Sigmoid colon (tissue), 7 donors: ENCODE measurements at regions of chr1 and their contacts with region 1.

Region 1: GRCh38 chr1:19385869-19386591 is 73.9 kb downstream of the SLC66A1 start:
- DNase-seq: peak; percentile 86
- H3K4me3 ChIP-seq: no peak overlapping the region
- H3K27ac ChIP-seq: peak overlapping the region; percentile 62 to 98 (median 74)
- H3K4me1 ChIP-seq: peaks cover 0 to 63% (median 55%) of the 10 kb centered on the region in 4 donors
- H3K27me3 ChIP-seq: no peaks in the 10 kb centered on the region
- CTCF ChIP-seq: no peak
- EP300 ChIP-seq: no peak
- POLR2A ChIP-seq: no peak

Region 2: DNA sequence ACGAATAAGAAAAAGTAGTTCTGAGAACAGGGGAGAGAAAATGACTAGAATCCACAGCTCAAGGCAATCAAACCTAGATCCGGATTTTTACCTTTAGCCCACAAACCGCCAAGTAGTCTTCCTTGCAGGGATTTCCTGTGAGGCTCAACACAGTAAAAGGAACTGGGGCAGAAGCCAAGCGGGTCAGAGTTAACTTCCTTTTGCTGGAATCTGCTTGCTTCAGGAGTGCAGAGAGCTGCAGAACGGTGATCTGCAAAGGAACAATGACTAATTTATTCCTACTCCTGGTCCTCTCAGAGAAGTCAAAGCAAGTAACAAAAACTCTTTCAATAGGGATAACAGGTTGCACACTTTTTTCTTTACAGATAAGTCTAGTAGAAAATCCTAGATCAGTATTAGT is 229.4 kb before region 1 on chr1:
- intact Hi-C with region 1: no loop called
- DNase-seq: peak; percentile 76
- H3K4me3 ChIP-seq: no peak overlapping the region
- H3K27ac ChIP-seq: peak overlapping the region in 1 of 4 donors; percentile 46
- H3K4me1 ChIP-seq: no peaks in the 10 kb centered on the region
- H3K27me3 ChIP-seq: no peaks in the 10 kb centered on the region
- CTCF ChIP-seq: no peak
- EP300 ChIP-seq: no peak
- POLR2A ChIP-seq: no peak

Region 3: DNA sequence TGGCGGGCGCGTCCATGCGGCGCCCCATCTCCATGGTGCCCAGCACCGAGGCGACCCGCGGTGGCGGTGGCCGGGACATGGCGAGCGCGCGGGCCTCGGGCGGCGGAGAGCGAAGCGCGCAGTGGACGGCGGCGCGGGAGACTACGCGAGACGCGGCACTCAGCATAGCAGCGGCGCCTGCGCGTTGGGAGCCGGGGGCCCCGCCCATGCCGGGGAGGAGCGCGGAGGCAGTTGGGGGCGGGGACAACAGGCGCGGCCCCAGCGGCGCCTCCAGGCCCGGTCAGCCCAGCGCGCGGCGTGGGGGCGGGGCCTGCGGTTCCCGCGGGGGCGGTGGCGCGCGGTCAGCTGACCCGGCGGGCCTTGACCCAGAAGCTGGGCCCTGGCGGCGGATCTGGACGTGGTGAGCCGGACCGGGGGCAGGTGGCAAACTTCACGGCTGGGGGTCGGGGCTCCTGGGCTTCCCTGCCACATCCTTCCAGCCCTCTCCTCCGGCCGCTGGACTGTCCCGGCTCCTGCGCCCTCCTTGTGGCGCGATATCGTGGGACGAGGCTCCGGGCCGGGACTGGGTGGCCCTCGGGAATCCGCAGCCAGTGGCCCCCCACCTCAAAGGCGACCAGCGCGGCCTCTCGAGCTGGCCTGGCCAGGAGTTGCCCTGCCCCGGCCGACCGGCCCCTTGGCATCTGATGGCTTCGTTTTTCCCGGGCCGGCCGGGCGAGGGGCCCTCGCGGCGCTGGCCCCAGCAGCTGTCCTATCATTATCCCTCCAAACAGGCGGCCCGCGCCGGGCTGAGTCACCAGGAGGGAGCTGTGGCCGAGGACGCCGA is 73.9 kb before region 1 on chr1 and contains the starts of genes AKR7A2 and SLC66A1:
- intact Hi-C with region 1: loop called (anchors 5 kb)
- DNase-seq: peak; percentile 95
- H3K4me3 ChIP-seq: peak within 1 kb of the TSS; percentile 84 to 94 (median 88)
- H3K27ac ChIP-seq: peak within 1 kb of the TSS; percentile 85 to 94 (median 92)
- H3K4me1 ChIP-seq: peaks cover 0 to 36% (median 30%) of the 10 kb centered on the region in 4 donors
- H3K27me3 ChIP-seq: no peaks in the 10 kb centered on the region
- CTCF ChIP-seq: peak in 2 of 4 experiments; percentile 12 to 26
- EP300 ChIP-seq: no peak
- POLR2A ChIP-seq: peak in 1 of 2 donors; percentile 39
- total RNA-seq, gene AKR7A2: 55.8 to 110 (median 77.2) TPM
- total RNA-seq, gene SLC66A1: 7.5 to 15.2 (median 8.8) TPM

Region 4: DNA sequence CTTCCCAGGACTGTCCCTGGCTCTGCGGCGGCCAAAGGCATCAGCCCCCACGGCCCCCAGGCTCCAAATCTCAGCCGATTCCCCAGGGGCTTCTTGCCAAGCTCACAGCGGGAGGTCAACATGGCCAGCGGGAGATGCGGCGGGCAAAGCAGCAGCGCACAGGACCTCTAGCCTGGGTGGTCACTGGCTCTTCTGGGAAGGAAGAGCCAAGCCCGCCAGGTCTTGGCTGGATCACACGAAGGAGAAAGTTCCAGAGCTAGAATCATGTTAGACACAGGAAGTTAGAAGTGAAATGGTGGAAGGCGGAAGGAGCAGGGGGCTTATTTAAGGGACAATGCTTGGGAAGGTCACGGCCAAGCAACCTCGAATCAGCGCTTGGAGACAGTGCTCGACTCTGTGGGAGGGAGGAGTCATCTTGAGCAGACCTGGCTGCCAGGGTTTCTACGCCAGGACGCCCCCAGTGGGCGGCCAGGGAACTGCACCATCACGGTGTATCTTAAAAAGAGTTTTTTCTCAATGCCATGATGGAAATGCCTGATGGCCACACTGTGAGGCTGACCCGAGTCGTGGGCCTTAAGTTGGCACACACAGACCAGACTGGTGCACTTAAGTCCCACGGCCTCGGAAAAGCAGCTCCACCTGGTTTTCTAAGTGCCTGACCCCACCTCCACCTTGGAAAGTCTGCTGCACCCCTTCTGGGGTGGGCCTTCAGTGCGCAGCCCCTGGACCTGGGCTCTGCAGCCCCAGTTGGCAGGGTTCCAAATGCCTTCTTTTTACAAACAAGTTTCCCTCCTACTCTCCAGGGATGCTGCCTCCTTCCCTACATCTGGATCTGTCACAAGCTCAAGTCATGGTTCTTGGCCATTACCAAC is 44.6 kb before region 1 on chr1:
- intact Hi-C with region 1: no loop called
- DNase-seq: peak; percentile 84
- H3K4me3 ChIP-seq: no peak overlapping the region
- H3K27ac ChIP-seq: peak overlapping the region; percentile 38 to 60 (median 56)
- H3K4me1 ChIP-seq: peaks cover 0 to 23% (median 11%) of the 10 kb centered on the region in 4 donors
- H3K27me3 ChIP-seq: no peaks in the 10 kb centered on the region
- CTCF ChIP-seq: peak; percentile 69 to 91 (median 82)
- EP300 ChIP-seq: no peak
- POLR2A ChIP-seq: no peak

Region 5: GRCh38 chr1:19353596-19353995 is 32.4 kb before region 1 on chr1:
- intact Hi-C with region 1: loop called (anchors 5 kb)
- DNase-seq: no peak
- H3K4me3 ChIP-seq: no peak overlapping the region
- H3K27ac ChIP-seq: peak overlapping the region in 3 of 4 donors; percentile 69 to 73 (median 69)
- H3K4me1 ChIP-seq: peaks cover 0 to 43% (median 35%) of the 10 kb centered on the region in 4 donors
- H3K27me3 ChIP-seq: no peaks in the 10 kb centered on the region
- CTCF ChIP-seq: no peak
- EP300 ChIP-seq: no peak
- POLR2A ChIP-seq: no peak

Region 6: GRCh38 chr1:19596714-19597495 is 210.9 kb after region 1 on chr1:
- intact Hi-C with region 1: loop called (anchors 5 kb)
- DNase-seq: peak; percentile 99
- H3K4me3 ChIP-seq: peak overlapping the region; percentile 64 to 95 (median 94)
- H3K27ac ChIP-seq: peak overlapping the region; percentile 89 to 98 (median 98)
- H3K4me1 ChIP-seq: peaks cover 0 to 52% (median 38%) of the 10 kb centered on the region in 4 donors
- H3K27me3 ChIP-seq: no peaks in the 10 kb centered on the region
- CTCF ChIP-seq: no peak
- EP300 ChIP-seq: no peak
- POLR2A ChIP-seq: peak; percentile 76 to 88